ENCODE measurements at regions of chr14 and their contacts with region 1.

Region 1: DNA sequence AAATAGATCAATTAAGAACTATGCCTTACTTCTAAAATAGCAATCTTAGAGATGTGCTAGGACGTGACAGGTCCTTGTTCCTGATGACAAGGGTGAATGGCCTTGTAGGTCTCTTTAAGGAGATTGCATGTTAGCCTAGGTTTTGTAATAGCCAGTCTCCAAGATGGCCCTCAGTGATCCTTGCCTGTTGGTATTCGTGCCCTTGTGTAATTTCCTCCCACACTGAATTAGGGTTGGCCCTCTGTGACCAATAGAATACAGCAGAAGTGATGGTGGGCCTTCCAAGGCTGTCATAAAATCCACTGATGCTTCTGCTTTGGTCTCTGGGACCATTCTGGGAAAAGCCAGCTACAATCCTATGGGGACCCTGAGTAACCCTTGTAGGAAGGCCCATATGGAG is 38.2 kb upstream of the SNX6 start:
- DNase-seq: no peak
- ATAC-seq: no peak
- H3K4me3 ChIP-seq: no peak overlapping the region
- H3K27ac ChIP-seq: peak overlapping the region in 1 of 2 experiments; percentile 17; a peak in 3 of 6 replicates
- H3K4me1 ChIP-seq: peaks cover 16% of the 10 kb centered on the region
- CTCF ChIP-seq: no peak
- EP300 ChIP-seq: no peak
- POLR2A ChIP-seq: no peak
- RAD21 ChIP-seq: no peak

Region 2: DNA sequence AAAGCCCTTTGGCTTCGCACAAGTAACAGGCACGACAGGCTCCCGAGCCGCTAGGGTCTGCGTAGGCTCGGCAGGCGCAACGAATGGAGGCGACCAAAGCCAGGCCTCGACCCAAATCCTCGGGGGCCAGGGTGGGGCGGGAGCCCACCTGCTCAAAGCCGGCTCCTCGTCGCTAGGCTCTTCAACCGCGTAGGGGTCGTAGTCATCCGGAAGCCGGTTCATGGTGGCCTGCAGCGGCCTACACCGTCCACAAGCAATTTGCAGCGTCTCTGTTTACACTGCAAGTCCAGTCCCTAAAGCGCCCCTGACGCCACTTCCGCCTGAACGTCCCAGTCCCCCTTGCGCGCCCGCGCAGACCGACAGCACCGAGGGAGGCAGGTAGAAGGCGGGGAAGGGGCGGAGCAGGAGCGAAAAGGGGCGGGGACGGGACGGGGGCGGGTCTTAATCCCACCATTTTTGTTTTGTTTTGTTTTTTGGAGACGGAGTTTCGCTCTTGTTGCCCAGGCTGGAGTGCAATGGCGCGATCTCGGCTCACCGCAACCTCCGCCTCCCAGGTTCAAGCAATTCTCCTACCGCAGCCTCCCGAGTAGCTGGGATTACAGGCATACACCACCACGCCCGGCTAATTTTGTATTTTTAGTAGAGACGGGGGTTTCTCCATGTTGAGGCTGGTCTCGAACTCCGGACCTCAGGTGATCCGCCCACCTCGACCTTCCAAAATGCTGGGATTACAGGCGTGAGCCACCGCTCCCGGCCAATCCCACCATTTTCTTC is 128.5 kb before region 1 on chr14 and contains the start of gene EAPP:
- CTCF ChIA-PET with region 1: no interaction called
- POLR2A ChIA-PET with region 1: no interaction called
- DNase-seq: peak; percentile 93 to 99
- ATAC-seq: peak; percentile 99 to 100
- H3K4me3 ChIP-seq: peak within 1 kb of the TSS; percentile 75
- H3K27ac ChIP-seq: peak within 1 kb of the TSS; percentile 85 to 93
- H3K4me1 ChIP-seq: peaks cover 17% of the 10 kb centered on the region; the same call in 2 of the 3 replicates
- CTCF ChIP-seq: no peak
- EP300 ChIP-seq: no peak
- POLR2A ChIP-seq: peak; percentile 72
- RAD21 ChIP-seq: peak in 1 of 2 experiments; percentile 26; a peak in 2 of 5 replicates
- polyA plus RNA-seq, gene EAPP: 62.3 and 93.0 TPM in 2 replicates

Region 3: DNA sequence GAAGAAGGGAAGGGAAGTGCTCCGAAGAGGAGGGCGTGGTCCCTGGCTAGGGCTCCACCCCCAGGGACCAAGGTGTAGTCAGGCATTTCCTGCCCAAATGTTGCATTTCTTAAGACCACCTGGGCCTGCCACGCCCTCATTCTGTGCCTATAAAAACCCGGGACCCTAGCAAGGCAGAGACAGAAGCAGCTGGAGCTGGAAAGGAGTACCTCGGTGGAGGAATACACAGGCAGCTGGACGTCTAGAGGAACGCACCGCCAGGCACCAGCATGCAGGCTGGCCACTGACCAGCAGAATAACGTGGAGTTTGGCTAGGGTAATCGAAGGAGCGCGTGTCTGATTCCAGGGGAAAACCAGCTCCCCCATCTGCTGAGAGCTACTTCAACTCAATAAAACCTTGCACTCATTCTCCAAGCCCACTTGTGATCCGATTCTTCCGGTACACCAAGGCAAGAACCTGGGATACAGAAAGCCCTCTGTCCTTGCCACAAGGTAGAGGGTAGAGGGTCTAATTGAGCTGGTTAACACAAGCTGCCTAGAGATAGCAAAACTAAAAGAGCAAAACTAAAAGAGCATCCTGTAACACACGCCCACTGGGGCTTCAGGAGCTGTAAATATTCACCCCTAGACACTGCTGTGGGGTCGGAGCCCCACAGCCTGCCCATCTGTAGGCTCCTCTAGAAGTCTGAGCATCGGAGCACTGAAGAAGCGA is 25.3 kb after region 1 on chr14:
- CTCF ChIA-PET with region 1: interaction called, 20 read pairs
- POLR2A ChIA-PET with region 1: no interaction called
- DNase-seq: peak; percentile 68 to 83
- ATAC-seq: peak; percentile 97 to 98
- H3K4me3 ChIP-seq: peak overlapping the region; percentile 53
- H3K27ac ChIP-seq: peak overlapping the region; percentile 82 to 88
- H3K4me1 ChIP-seq: peaks cover 11% of the 10 kb centered on the region; the same call in 2 of the 3 replicates
- CTCF ChIP-seq: no peak
- EP300 ChIP-seq: no peak
- POLR2A ChIP-seq: peak; percentile 87
- RAD21 ChIP-seq: no peak

Region 4: GRCh38 chr14:34707722-34708121 is 39.6 kb after region 1 on chr14:
- CTCF ChIA-PET with region 1: interaction called, 13 read pairs
- POLR2A ChIA-PET with region 1: no interaction called
- DNase-seq: no peak
- ATAC-seq: peak in 1 of 2 experiments; percentile 57; a peak in 4 of 6 replicates
- H3K4me3 ChIP-seq: no peak overlapping the region
- H3K27ac ChIP-seq: no peak overlapping the region
- H3K4me1 ChIP-seq: peaks cover 49% of the 10 kb centered on the region
- CTCF ChIP-seq: no peak
- EP300 ChIP-seq: no peak
- POLR2A ChIP-seq: no peak
- RAD21 ChIP-seq: no peak